Transverse colon (tissue), 4 donors: ENCODE measurements at regions of chr3 and their contacts with region 1.

Region 1: DNA sequence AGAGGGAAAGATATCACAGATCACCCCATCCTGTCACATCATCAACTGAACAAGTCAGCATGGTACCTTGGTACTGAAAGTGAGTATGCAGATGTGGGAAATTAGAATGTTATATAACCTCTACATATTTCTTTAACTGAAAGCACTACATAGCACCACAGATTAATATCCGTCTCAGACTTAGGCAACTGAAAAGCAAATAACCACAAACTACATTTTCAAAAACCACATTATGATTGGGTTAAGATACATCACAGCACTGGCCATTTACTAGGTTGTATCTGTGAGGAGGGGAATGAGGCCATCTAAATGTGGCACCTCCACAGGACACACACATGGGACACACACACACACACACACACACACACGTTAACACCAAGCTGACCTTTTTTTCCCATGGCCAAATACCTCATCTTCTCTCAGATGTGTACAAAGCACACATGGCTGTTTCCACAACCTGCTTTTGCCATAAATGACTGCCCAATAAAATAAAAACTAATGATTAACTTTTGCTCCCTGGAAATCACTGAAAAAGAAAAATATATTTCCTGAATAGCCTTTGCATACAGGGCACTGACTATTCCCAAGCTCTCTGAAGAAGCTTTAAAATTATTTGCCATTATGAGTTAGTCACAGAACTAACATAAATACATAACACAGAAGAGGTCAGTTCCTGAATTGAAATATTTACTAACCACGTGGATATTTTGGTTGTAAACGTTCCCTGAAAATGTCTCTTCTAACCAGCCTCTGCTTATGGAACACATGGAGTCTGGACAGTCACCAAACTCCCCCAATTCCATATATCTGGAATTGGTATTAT is 60.1 kb downstream of the SUMF1 start:
- DNase-seq: no peak
- H3K4me3 ChIP-seq: no peak overlapping the region
- H3K27ac ChIP-seq: no peak overlapping the region
- H3K4me1 ChIP-seq: peaks cover 0 to 7% (median 3%) of the 10 kb centered on the region in 4 donors
- H3K27me3 ChIP-seq: no peaks in the 10 kb centered on the region
- CTCF ChIP-seq: no peak
- EP300 ChIP-seq: no peak
- POLR2A ChIP-seq: no peak

Region 2: GRCh38 chr3:4336850-4337546 is 70.0 kb before region 1 on chr3:
- in situ Hi-C with region 1: no loop called
- intact Hi-C with region 1: loop called (anchors 2 kb)
- DNase-seq: no peak
- H3K4me3 ChIP-seq: no peak overlapping the region
- H3K27ac ChIP-seq: no peak overlapping the region
- H3K4me1 ChIP-seq: peaks cover 0 to 5% (median 0%) of the 10 kb centered on the region in 4 donors
- H3K27me3 ChIP-seq: no peaks in the 10 kb centered on the region
- CTCF ChIP-seq: no peak
- EP300 ChIP-seq: no peak
- POLR2A ChIP-seq: no peak